ENCODE measurements at regions of chr5 and their contacts with region 1.

Region 1: DNA sequence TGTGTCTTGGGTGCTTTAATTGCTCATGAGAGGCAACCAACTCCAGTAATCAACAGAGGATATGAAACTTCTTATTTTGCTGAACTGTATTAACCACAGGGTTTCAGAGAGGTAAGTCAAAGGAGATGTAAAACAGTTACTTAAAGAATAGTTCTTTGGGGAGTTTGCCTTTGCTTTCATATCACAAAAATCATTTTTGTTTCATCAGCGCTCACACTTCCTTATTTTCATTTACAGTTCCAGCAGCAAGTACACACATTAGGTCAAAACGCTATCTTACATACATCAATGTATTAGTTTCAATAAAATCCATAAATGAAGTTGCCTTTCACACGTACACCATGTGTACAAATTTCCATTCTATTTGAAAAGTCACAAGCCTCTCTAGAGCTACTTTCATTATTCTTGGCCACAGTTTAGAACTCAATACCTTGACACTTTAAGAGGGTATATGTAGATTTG is 50.1 kb downstream of the ST8SIA4 start:
- DNase-seq: no peak
- H3K4me3 Mint-ChIP-seq: peak overlapping the region; percentile 51
- H3K27ac Mint-ChIP-seq: peak overlapping the region; percentile 73
- H3K4me1 Mint-ChIP-seq: peaks cover 34% of the 10 kb centered on the region
- H3K27me3 Mint-ChIP-seq: no peaks in the 10 kb centered on the region

Region 2: DNA sequence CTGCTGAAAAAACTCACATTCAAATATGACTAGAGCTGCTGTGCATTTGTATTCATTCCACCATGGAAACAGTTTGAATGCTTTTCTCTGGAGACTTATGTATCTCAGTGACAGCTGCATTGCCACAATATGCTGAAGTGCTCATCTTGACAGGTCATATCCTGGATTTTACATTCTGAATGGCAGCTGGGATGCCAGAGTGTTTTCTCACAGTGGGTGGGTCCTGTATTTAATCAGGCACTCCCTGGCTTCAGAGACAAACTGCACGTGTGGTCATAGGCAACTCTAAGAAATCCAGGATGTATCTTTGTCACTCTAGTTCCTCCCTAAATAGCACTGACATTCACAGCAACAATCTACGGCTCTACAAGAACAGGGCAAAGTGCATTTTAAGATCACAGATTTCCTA is 25.5 kb before region 1 on chr5:
- CTCF ChIA-PET with region 1: no interaction called
- intact Hi-C with region 1: loop called (anchors 1 kb)
- DNase-seq: peak; percentile 12
- H3K4me3 Mint-ChIP-seq: no peak overlapping the region
- H3K27ac Mint-ChIP-seq: no peak overlapping the region
- H3K4me1 Mint-ChIP-seq: peaks cover 33% of the 10 kb centered on the region
- H3K27me3 Mint-ChIP-seq: no peaks in the 10 kb centered on the region

Region 3: DNA sequence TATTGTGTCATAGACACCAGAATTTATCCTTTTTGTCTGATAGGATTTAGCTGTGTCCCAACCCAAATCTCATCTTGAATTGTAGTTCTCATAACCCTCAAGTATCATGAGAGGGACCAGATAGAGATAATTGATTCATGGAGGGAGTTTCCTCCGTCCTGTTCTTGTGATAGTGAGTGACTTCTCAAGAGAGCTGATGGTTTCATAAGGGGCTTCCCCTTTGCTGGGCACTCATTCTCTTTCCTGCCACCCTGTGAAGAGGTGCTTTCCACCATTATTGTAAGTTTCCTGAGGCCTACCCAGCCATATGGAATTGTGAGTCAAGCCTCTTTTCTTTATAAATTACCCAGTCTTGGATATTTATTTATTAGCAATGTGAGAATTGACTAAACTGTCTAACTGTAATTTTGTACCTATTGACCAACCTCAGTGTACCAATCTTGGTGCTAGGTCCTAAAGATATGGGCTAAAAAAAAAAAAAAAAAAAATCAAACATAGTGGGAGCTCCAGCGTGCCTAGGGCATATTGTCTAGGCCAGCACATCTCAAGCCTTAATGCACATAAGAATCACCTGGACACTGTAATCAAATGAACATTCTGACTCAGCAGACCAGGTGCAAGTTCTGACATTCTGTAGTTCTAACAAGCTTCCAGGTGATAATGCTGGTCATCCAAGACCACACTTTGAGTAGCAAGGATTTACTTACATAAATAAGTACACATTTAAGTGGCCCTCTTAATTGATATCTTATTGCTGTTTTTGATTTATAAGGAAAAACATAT is 19.6 kb after region 1 on chr5:
- CTCF ChIA-PET with region 1: no interaction called
- intact Hi-C with region 1: loop called (anchors 1 kb)
- DNase-seq: peak; percentile 65
- H3K4me3 Mint-ChIP-seq: no peak overlapping the region
- H3K27ac Mint-ChIP-seq: peak overlapping the region; percentile 64
- H3K4me1 Mint-ChIP-seq: peaks cover 43% of the 10 kb centered on the region
- H3K27me3 Mint-ChIP-seq: no peaks in the 10 kb centered on the region

Region 4: GRCh38 chr5:100909034-100909433 is 56.0 kb after region 1 on chr5:
- CTCF ChIA-PET with region 1: no interaction called
- intact Hi-C with region 1: no loop called
- DNase-seq: no peak
- H3K4me3 Mint-ChIP-seq: no peak overlapping the region
- H3K27ac Mint-ChIP-seq: no peak overlapping the region
- H3K4me1 Mint-ChIP-seq: peaks cover 34% of the 10 kb centered on the region
- H3K27me3 Mint-ChIP-seq: no peaks in the 10 kb centered on the region

Measured in activated naive CD4-positive, alpha-beta T cell treated with anti-CD3 and anti-CD28 coated beads for 36 hours (primary cell).